ENCODE measurements at regions of chr6 and their contacts with region 1.

Region 1: DNA sequence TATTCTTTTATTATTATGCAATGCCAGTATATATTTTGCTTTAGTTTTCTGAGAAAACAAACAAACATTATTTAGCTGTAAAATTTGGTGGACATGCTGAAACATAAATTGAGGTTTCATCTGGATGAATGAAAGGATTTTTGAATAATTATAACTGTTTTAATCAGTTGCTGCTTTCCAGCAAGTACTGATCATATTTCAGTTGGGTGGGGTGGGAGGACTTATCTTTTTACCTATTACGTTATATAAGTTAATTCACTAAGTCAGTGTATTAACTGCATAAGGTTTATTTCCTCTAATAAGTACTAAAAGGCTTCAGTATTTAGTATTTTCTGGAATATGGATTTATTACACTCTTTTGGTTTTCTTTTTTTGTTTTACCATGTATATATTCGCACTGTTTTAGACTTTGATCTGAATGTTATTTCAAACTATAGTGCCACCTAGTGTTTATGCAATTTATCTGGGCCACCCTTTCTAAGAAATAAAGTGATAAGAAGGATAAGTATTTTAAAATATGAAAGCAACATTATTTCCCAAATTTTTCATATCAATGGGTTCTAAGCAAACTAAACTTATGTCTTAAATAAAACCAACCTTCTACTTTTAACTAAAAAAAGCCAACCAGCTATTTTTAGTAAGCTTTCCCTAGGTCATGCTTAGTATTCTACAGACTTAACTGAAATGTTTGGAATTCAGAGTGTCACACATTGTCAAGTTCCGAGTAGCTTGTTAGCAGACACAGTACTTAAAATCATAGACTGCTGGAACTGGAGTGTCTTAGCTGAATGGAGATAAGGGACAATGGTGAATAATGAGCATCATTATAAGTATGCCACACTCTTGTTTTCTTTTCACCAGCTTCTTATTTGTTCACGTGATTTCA is 105.4 kb upstream of the MCHR2 start:
- DNase-seq: no peak
- H3K4me3 ChIP-seq: no peak overlapping the region
- H3K27ac ChIP-seq: no peak overlapping the region
- H3K4me1 ChIP-seq: no peaks in the 10 kb centered on the region
- H3K27me3 ChIP-seq: peaks cover 0 to 3% (median 0%) of the 10 kb centered on the region in 4 donors
- CTCF ChIP-seq: peak; percentile 49 to 60 (median 57)
- EP300 ChIP-seq: no peak
- POLR2A ChIP-seq: no peak

Region 2: GRCh38 chr6:99868074-99868702 is 231.2 kb before region 1 on chr6:
- intact Hi-C with region 1: loop called (anchors 5 kb)
- DNase-seq: no peak
- H3K4me3 ChIP-seq: peak overlapping the region in 1 of 4 donors; percentile 26
- H3K27ac ChIP-seq: no peak overlapping the region
- H3K4me1 ChIP-seq: peaks cover 0 to 7% (median 0%) of the 10 kb centered on the region in 4 donors
- H3K27me3 ChIP-seq: peaks cover 0 to 17% (median 2%) of the 10 kb centered on the region in 4 donors
- CTCF ChIP-seq: peak; percentile 48 to 79 (median 72)
- EP300 ChIP-seq: no peak
- POLR2A ChIP-seq: no peak

Region 3: GRCh38 chr6:100001915-100002388 is 97.5 kb before region 1 on chr6:
- intact Hi-C with region 1: loop called (anchors 1 kb)
- DNase-seq: no peak
- H3K4me3 ChIP-seq: no peak overlapping the region
- H3K27ac ChIP-seq: no peak overlapping the region
- H3K4me1 ChIP-seq: no peaks in the 10 kb centered on the region
- H3K27me3 ChIP-seq: peaks cover 0 to 12% (median 0%) of the 10 kb centered on the region in 4 donors
- CTCF ChIP-seq: peak; percentile 77 to 93 (median 89)
- EP300 ChIP-seq: no peak
- POLR2A ChIP-seq: no peak

Measured in esophagus muscularis mucosa (tissue), 4 donors.